GM12878 (cell line): ENCODE measurements at regions of chr15 and their contacts with region 1.

Region 1: DNA sequence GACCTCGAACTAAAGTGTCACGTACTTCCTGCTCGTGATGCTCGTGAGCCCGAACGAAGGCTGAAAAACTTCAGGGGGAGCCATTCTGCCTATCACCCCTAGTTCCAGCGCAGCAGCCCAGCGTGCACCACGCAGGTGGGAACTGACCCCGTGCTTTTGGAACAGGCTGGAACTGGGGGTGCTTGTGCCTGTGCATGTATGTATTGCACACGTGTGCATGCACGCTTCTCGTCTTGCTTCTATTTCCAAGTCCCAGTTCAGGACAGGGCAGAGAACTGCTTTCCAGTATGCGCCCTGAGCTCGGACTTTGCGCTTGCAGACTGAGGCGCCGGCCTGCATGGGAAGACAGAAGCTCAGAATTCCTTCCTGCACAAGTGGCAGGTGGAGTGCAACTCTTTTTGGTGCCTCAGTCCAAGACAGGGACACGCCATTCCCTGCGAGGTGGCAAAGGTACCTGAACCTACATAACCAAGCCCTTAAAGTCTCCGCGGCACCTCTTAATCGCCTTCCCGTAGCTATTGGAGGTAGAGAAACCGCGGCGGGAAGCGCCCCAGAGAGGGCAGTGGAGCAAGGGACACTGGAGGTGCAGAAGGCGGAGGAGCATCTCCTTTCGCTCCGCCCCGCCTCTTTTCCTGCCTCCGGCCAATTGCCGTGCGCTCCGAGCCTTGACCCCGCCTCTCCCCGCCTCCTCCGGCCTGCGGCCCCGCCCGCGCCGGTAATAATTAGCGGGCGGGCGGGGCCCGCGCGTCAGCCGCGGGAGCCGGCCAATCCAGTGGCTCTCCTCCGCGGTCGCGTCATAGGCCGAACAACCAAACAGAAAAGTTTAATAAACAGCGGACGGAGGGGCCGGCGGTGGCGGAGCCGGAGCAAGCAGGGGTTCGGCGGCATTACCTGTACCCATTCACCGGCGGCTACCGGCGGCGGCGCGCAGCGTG is at the start of gene ZFAND6:
- DNase-seq: peak; percentile 74
- ATAC-seq: peak; percentile 80
- H3K4me3 ChIP-seq: peak within 1 kb of the TSS; percentile 98
- H3K27ac ChIP-seq: peak within 1 kb of the TSS; percentile 88
- H3K4me1 ChIP-seq: peaks cover 32% of the 10 kb centered on the region
- H3K27me3 ChIP-seq: no peaks in the 10 kb centered on the region
- CTCF ChIP-seq: peak in 1 of 3 experiments; percentile 27; a peak in 2 of 6 replicates
- EP300 ChIP-seq: peak in 1 of 2 experiments; percentile 42; a peak in 1 of 4 replicates
- POLR2A ChIP-seq: peak; percentile 87
- RAD21 ChIP-seq: no peak
- polyA plus RNA-seq, gene ZFAND6: 98.1 to 111 TPM

Region 2: GRCh38 chr15:79834495-79834894 is 224.6 kb before region 1 on chr15:
- CTCF ChIA-PET with region 1: no interaction called
- POLR2A ChIA-PET with region 1: no interaction called
- RAD21 ChIA-PET with region 1: no interaction called
- SMC1A ChIA-PET with region 1: no interaction called
- in situ Hi-C with region 1: no loop called
- intact Hi-C with region 1: no loop called
- DNase-seq: no peak
- ATAC-seq: no peak
- H3K4me3 ChIP-seq: no peak overlapping the region
- H3K27ac ChIP-seq: no peak overlapping the region
- H3K4me1 ChIP-seq: peaks cover 8% of the 10 kb centered on the region
- H3K27me3 ChIP-seq: no peaks in the 10 kb centered on the region
- CTCF ChIP-seq: no peak
- EP300 ChIP-seq: no peak
- POLR2A ChIP-seq: no peak
- RAD21 ChIP-seq: no peak

Region 3: GRCh38 chr15:79923515-79924395 is 135.4 kb before region 1 on chr15:
- CTCF ChIA-PET with region 1: no interaction called
- POLR2A ChIA-PET with region 1: no interaction called
- RAD21 ChIA-PET with region 1: interaction called, 3 read pairs
- SMC1A ChIA-PET with region 1: no interaction called
- in situ Hi-C with region 1: no loop called
- intact Hi-C with region 1: loop called (anchors 5 kb)
- DNase-seq: peak; percentile 94
- ATAC-seq: peak; percentile 97
- H3K4me3 ChIP-seq: peak overlapping the region; percentile 80
- H3K27ac ChIP-seq: peak overlapping the region; percentile 92
- H3K4me1 ChIP-seq: no peaks in the 10 kb centered on the region
- H3K27me3 ChIP-seq: no peaks in the 10 kb centered on the region
- CTCF ChIP-seq: no peak
- EP300 ChIP-seq: no peak
- POLR2A ChIP-seq: peak; percentile 94
- RAD21 ChIP-seq: 0 out of 2 replicates have a peak, but pooled peaks have one; percentile 2

Region 4: GRCh38 chr15:79978655-79979514 is 80.2 kb before region 1 on chr15:
- CTCF ChIA-PET with region 1: interaction called, 3 read pairs
- POLR2A ChIA-PET with region 1: interaction called, 7 read pairs
- RAD21 ChIA-PET with region 1: interaction called, 3 read pairs
- SMC1A ChIA-PET with region 1: interaction called, 5 read pairs
- in situ Hi-C with region 1: no loop called
- intact Hi-C with region 1: loop called (anchors 2 kb)
- DNase-seq: peak; percentile 95
- ATAC-seq: peak; percentile 74
- H3K4me3 ChIP-seq: peak overlapping the region; percentile 47; the same call in 1 of the 2 replicates
- H3K27ac ChIP-seq: peak overlapping the region; percentile 99
- H3K4me1 ChIP-seq: peaks cover 71% of the 10 kb centered on the region
- H3K27me3 ChIP-seq: no peaks in the 10 kb centered on the region
- CTCF ChIP-seq: no peak
- EP300 ChIP-seq: peak; percentile 78 to 87; a peak in 2 of 4 replicates
- POLR2A ChIP-seq: no peak
- RAD21 ChIP-seq: peak; percentile 19; the same call in 1 of the 2 replicates

Region 5: DNA sequence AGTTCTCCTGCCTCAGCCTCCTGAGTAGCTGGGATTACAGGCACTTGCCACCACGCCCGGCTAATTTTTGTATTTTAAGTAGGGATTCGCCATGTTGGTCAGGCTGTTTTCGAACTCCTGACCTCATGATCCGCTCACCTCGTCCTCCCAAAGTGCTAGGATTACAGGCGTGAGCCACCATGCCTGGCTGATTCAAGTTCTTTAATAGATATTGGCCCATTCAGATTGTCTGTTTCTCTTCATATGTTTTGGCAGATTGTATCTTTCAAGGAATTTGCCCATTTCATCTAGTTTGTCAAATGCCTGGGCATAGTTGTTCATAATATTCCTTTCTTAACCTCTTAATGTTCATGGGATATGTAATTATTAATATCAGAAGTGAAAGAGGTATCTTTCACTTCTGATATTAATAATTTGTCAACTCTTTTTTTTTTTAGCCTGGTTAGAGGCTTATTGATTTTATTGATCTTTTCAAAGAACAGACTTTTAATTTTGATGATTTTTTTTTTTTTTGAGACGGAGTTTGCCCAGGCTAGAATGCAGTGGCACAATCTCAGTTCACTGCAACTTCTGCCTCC is 39.9 kb before region 1 on chr15:
- CTCF ChIA-PET with region 1: interaction called, 4 read pairs
- POLR2A ChIA-PET with region 1: interaction called, 27 read pairs
- RAD21 ChIA-PET with region 1: interaction called, 42 read pairs
- SMC1A ChIA-PET with region 1: interaction called, 18 read pairs
- in situ Hi-C with region 1: loop called (anchors 5 kb)
- intact Hi-C with region 1: loop called (anchors 1 kb)
- DNase-seq: no peak
- ATAC-seq: peak; percentile 4
- H3K4me3 ChIP-seq: peak overlapping the region; percentile 60
- H3K27ac ChIP-seq: peak overlapping the region; percentile 92
- H3K4me1 ChIP-seq: peaks cover 30% of the 10 kb centered on the region
- H3K27me3 ChIP-seq: no peaks in the 10 kb centered on the region
- CTCF ChIP-seq: no peak
- EP300 ChIP-seq: peak; percentile 8 to 43; a peak in 1 of 4 replicates
- POLR2A ChIP-seq: no peak
- RAD21 ChIP-seq: no peak

Region 6: DNA sequence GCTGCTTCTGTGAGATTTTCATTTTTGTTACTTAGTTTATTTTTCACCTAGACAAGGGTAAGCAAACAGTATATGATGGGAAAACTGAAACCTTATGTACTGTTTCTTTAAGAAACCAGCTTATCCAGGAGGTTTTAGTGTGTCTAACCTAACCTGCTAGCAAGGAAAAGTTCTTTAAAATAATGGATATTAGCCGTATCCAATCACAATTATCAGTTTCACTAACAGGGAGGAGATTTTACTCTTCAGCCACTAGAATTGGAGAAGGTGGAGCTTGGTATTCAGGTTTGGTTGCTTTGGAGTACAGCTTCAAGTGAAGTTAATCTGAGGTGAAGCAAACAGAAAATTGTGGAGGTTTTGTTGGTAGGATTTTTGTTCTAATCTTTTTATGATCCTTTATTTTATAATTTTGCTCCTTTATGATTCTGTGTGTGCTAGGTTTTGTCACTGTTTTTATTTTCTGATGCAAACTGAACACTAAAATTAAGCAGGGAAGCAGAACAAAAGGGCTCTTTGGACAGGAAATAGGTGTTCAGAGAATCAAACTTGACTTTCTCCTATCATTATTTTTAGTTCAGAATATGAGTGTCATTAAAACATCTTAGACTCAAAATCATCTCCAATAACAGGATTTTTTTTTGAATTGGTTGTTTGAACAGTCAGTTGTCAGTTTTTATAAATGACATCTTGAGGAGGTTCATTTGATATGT is 13.3 kb after region 1 on chr15:
- CTCF ChIA-PET with region 1: interaction called, 47 read pairs
- POLR2A ChIA-PET with region 1: interaction called, 23 read pairs
- RAD21 ChIA-PET with region 1: interaction called, 59 read pairs
- SMC1A ChIA-PET with region 1: interaction called, 27 read pairs
- in situ Hi-C with region 1: no loop called
- intact Hi-C with region 1: no loop called
- DNase-seq: peak; percentile 83
- ATAC-seq: peak; percentile 88
- H3K4me3 ChIP-seq: peak overlapping the region; percentile 57
- H3K27ac ChIP-seq: peak overlapping the region; percentile 59
- H3K4me1 ChIP-seq: peaks cover 13% of the 10 kb centered on the region; the same call in 1 of the 2 replicates
- H3K27me3 ChIP-seq: no peaks in the 10 kb centered on the region
- CTCF ChIP-seq: no peak
- EP300 ChIP-seq: no peak
- POLR2A ChIP-seq: no peak
- RAD21 ChIP-seq: no peak

Region 7: DNA sequence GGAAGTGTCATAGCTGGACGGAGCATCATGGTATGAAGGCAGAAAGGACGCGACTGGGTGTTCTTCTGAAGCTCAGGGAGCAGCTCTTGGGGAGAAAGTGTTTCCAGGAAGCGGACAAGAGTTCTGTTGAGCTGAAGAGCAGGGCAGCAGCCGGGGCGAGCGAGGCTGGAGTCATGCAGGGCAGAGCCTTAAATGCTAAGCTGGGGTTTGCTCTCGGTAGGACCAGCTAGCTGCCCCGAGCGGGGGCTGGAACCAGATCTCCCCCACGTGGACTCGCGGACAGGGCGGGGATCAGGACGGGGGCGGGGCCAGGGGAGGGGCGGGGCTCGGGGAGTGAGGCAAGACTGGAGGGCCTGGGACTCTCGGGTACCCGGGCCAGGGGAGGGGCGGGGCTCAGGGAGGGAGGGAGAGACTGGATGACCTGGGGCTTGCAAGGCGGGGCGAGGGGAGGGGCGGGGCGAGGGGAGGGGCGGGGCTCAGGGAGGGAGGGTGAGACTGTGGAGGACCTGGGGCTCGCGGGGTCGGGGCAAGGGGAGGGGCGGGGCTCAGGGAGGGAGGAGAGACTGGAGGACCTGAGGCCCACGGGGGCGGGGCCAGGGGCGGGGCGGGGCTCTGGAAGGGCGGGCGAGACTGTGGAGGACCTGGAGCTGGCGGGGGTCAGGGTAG is 93.2 kb after region 1 on chr15:
- CTCF ChIA-PET with region 1: interaction called, 3 read pairs
- POLR2A ChIA-PET with region 1: interaction called, 4 read pairs
- RAD21 ChIA-PET with region 1: interaction called, 6 read pairs
- SMC1A ChIA-PET with region 1: interaction called, 8 read pairs
- in situ Hi-C with region 1: no loop called
- intact Hi-C with region 1: loop called (anchors 5 kb)
- DNase-seq: peak; percentile 43
- ATAC-seq: peak; percentile 81
- H3K4me3 ChIP-seq: peak overlapping the region; percentile 74
- H3K27ac ChIP-seq: no peak overlapping the region; the same call in 1 of the 2 replicates
- H3K4me1 ChIP-seq: peaks cover 8% of the 10 kb centered on the region
- H3K27me3 ChIP-seq: no peaks in the 10 kb centered on the region
- CTCF ChIP-seq: no peak
- EP300 ChIP-seq: no peak
- POLR2A ChIP-seq: no peak
- RAD21 ChIP-seq: no peak

Region 8: GRCh38 chr15:80450811-80451321 is 391.7 kb after region 1 on chr15:
- CTCF ChIA-PET with region 1: no interaction called
- POLR2A ChIA-PET with region 1: no interaction called
- RAD21 ChIA-PET with region 1: no interaction called
- SMC1A ChIA-PET with region 1: no interaction called
- in situ Hi-C with region 1: no loop called
- intact Hi-C with region 1: no loop called
- DNase-seq: no peak
- ATAC-seq: no peak
- H3K4me3 ChIP-seq: no peak overlapping the region
- H3K27ac ChIP-seq: no peak overlapping the region
- H3K4me1 ChIP-seq: no peaks in the 10 kb centered on the region
- H3K27me3 ChIP-seq: no peaks in the 10 kb centered on the region; a peak in 3 of 4 replicates
- CTCF ChIP-seq: no peak
- EP300 ChIP-seq: no peak
- POLR2A ChIP-seq: no peak
- RAD21 ChIP-seq: no peak